Endothelial cell of umbilical vein (primary cell): ENCODE measurements at regions of chr11 and their contacts with region 1.

Region 1: GRCh38 chr11:32100495-32100894 is 9.6 kb downstream of the RCN1 start:
- DNase-seq: no peak
- H3K4me3 ChIP-seq: no peak overlapping the region
- H3K27ac ChIP-seq: no peak overlapping the region
- H3K4me1 ChIP-seq: peaks cover 32% of the 10 kb centered on the region
- H3K27me3 ChIP-seq: no peaks in the 10 kb centered on the region
- CTCF ChIP-seq: no peak
- POLR2A ChIP-seq: no peak

Region 2: DNA sequence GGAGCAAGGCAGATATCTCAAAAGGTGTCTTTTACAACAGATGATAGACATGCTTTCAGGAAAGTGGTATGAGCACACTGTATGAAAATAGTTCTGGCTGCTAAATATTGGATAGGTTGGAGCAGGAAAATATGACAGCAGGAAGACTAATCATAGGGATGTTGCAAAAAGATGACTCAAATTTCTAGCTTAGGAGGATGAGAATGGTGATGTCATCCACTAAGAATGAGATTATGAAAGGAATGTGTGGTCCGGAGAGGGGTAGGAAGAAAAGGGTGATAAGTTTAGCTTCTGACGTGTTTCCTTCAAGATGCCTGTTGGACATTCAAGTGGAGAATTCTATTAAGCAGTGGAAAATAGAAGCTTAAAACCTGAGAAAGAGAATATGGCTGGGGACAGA is 36.8 kb after region 1 on chr11:
- CTCF ChIA-PET with region 1: interaction called, 3 read pairs
- POLR2A ChIA-PET with region 1: no interaction called
- dilution Hi-C with region 1: no loop called
- intact Hi-C with region 1: loop called (anchors 1 kb)
- DNase-seq: peak; percentile 81
- H3K4me3 ChIP-seq: no peak overlapping the region
- H3K27ac ChIP-seq: peak overlapping the region; percentile 84
- H3K4me1 ChIP-seq: peaks cover 14% of the 10 kb centered on the region
- H3K27me3 ChIP-seq: no peaks in the 10 kb centered on the region
- CTCF ChIP-seq: no peak
- POLR2A ChIP-seq: no peak

Region 3: DNA sequence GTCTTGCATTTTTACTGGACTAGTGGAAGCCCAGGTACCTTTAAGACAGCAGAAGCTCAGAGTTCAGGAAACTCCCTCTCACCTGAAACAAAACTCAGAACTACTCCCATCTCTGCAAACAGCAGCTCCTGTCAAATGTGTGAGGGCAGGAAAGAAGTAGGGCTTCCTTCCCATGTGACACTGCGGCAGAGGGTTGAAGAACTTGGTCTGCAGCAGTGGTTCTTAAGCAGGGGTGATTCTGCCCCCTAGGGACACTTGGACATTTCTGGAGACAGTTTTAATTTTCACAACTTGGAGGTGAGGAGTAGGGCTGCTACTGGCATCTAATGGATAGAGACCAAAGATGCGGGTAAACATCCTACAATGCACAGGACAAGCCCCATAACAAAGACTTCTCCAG is 53.8 kb after region 1 on chr11:
- CTCF ChIA-PET with region 1: interaction called, 12 read pairs
- POLR2A ChIA-PET with region 1: no interaction called
- dilution Hi-C with region 1: no loop called
- intact Hi-C with region 1: loop called (anchors 5 kb)
- DNase-seq: peak; percentile 55
- H3K4me3 ChIP-seq: no peak overlapping the region
- H3K27ac ChIP-seq: no peak overlapping the region
- H3K4me1 ChIP-seq: peaks cover 2% of the 10 kb centered on the region
- H3K27me3 ChIP-seq: no peaks in the 10 kb centered on the region
- CTCF ChIP-seq: peak; percentile 23 to 42
- POLR2A ChIP-seq: no peak

Region 4: GRCh38 chr11:32225571-32226285 is 125.2 kb after region 1 on chr11:
- CTCF ChIA-PET with region 1: no interaction called
- POLR2A ChIA-PET with region 1: no interaction called
- dilution Hi-C with region 1: no loop called
- intact Hi-C with region 1: no loop called
- DNase-seq: no peak
- H3K4me3 ChIP-seq: no peak overlapping the region
- H3K27ac ChIP-seq: no peak overlapping the region
- H3K4me1 ChIP-seq: no peaks in the 10 kb centered on the region
- H3K27me3 ChIP-seq: no peaks in the 10 kb centered on the region
- CTCF ChIP-seq: no peak
- POLR2A ChIP-seq: no peak